ENCODE measurements at regions of chr7 and their contacts with region 1.

Region 1: GRCh38 chr7:83271212-83272099 is 108.8 kb upstream of the PCLO start:
- DNase-seq: peak; percentile 52
- ATAC-seq: peak; percentile 70
- H3K4me3 ChIP-seq: no peak overlapping the region
- H3K27ac ChIP-seq: no peak overlapping the region
- H3K4me1 ChIP-seq: no peaks in the 10 kb centered on the region
- H3K27me3 ChIP-seq: 0 out of 2 replicates have a peak, but pooled peaks cover 3% of the 10 kb centered on the region
- CTCF ChIP-seq: peak; percentile 71

Region 2: GRCh38 chr7:82699773-82700186 is 571.7 kb before region 1 on chr7:
- CTCF ChIA-PET with region 1: no interaction called
- POLR2A ChIA-PET with region 1: interaction called, 12 read pairs
- intact Hi-C with region 1: no loop called
- DNase-seq: peak; percentile 96
- ATAC-seq: peak; percentile 82
- H3K4me3 ChIP-seq: no peak overlapping the region
- H3K27ac ChIP-seq: peak overlapping the region; percentile 40; the same call in 1 of the 2 replicates
- H3K4me1 ChIP-seq: peaks cover 13% of the 10 kb centered on the region
- H3K27me3 ChIP-seq: no peaks in the 10 kb centered on the region
- CTCF ChIP-seq: no peak

Region 3: GRCh38 chr7:82810558-82811259 is 460.7 kb before region 1 on chr7:
- CTCF ChIA-PET with region 1: no interaction called
- POLR2A ChIA-PET with region 1: no interaction called
- intact Hi-C with region 1: loop called (anchors 1 kb)
- DNase-seq: peak; percentile 63
- ATAC-seq: peak; percentile 97
- H3K4me3 ChIP-seq: no peak overlapping the region
- H3K27ac ChIP-seq: no peak overlapping the region
- H3K4me1 ChIP-seq: peaks cover 12% of the 10 kb centered on the region
- H3K27me3 ChIP-seq: no peaks in the 10 kb centered on the region
- CTCF ChIP-seq: peak; percentile 83

Region 4: GRCh38 chr7:83072576-83073517 is 198.6 kb before region 1 on chr7:
- CTCF ChIA-PET with region 1: no interaction called
- POLR2A ChIA-PET with region 1: no interaction called
- intact Hi-C with region 1: loop called (anchors 5 kb)
- DNase-seq: peak; percentile 55
- ATAC-seq: peak; percentile 71
- H3K4me3 ChIP-seq: no peak overlapping the region
- H3K27ac ChIP-seq: no peak overlapping the region
- H3K4me1 ChIP-seq: no peaks in the 10 kb centered on the region
- H3K27me3 ChIP-seq: no peaks in the 10 kb centered on the region
- CTCF ChIP-seq: peak; percentile 69

Region 5: DNA sequence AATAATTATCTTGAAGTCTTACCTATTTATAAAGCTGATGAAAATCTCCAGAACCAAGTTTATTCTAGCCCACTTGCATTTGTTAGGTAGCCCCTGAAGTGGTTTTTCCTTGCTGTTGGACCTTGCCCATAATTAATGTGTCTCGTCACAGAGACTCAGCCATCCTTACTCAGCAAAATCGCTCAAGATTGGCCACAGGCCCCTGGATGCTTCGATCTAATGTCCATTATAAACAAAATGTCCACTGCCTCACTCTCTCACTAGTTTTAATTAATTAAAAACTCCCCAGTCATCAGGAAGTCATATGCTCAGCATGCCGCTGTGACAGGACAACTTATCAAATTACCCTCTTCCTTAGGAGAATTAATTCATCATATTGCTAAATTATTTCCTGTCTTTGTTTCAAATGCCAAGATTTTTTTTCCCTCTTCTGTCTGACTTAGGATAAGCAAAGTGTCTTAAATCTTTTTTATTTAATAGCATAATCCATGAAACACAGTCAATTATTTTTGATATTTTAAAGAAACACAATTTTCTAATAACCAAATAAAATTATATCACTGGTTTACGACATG is 18.1 kb after region 1 on chr7:
- CTCF ChIA-PET with region 1: no interaction called
- POLR2A ChIA-PET with region 1: interaction called, 11 read pairs
- intact Hi-C with region 1: no loop called
- DNase-seq: no peak
- ATAC-seq: no peak
- H3K4me3 ChIP-seq: no peak overlapping the region
- H3K27ac ChIP-seq: no peak overlapping the region
- H3K4me1 ChIP-seq: no peaks in the 10 kb centered on the region
- H3K27me3 ChIP-seq: peaks cover 14% of the 10 kb centered on the region
- CTCF ChIP-seq: no peak

Region 6: GRCh38 chr7:83321011-83321410 is 49.6 kb after region 1 on chr7:
- CTCF ChIA-PET with region 1: no interaction called
- POLR2A ChIA-PET with region 1: no interaction called
- intact Hi-C with region 1: no loop called
- DNase-seq: no peak
- ATAC-seq: no peak
- H3K4me3 ChIP-seq: no peak overlapping the region
- H3K27ac ChIP-seq: no peak overlapping the region
- H3K4me1 ChIP-seq: no peaks in the 10 kb centered on the region
- H3K27me3 ChIP-seq: peaks cover 28% of the 10 kb centered on the region
- CTCF ChIP-seq: no peak

Measured in PC-3 (cell line).